ENCODE measurements at regions of chr10 and their contacts with region 1.

Region 1: DNA sequence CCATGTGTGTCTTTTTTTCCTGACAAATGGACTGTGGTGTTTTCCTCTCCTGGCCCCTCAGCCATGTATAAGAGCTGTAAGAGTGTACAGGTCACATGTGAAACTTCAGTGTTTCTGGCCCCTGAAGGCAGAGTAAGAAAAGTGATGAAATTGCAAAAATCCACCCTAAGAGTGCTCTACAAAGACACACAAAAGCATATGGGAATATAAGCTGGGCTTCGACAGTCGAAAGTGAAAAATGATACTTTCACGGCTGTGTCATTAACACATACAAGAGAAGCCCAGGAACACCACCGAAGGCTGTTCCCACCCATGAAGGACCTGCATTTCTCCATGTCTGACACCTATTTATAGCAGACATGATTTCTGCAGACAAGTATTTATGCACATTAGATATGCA is 192.2 kb downstream of the PARD3 start:
- DNase-seq: no peak
- H3K4me3 ChIP-seq: no peak overlapping the region
- H3K27ac ChIP-seq: no peak overlapping the region
- H3K27me3 ChIP-seq: no peaks in the 10 kb centered on the region
- CTCF ChIP-seq: no peak

Region 2: GRCh38 chr10:34637418-34637911 is 14.5 kb after region 1 on chr10:
- CTCF ChIA-PET with region 1: interaction called, 13 read pairs
- POLR2A ChIA-PET with region 1: no interaction called
- DNase-seq: no peak
- H3K4me3 ChIP-seq: no peak overlapping the region
- H3K27ac ChIP-seq: no peak overlapping the region
- H3K27me3 ChIP-seq: no peaks in the 10 kb centered on the region
- CTCF ChIP-seq: peak; percentile 99